ENCODE measurements at regions of chr6 and their contacts with region 1.

Region 1: GRCh38 chr6:31680840-31681671 is at the start of gene LY6G5C:
- DNase-seq: peak; percentile 89
- ATAC-seq: peak; percentile 91
- total RNA-seq, gene LY6G5C: 1.5 TPM

Region 2: DNA sequence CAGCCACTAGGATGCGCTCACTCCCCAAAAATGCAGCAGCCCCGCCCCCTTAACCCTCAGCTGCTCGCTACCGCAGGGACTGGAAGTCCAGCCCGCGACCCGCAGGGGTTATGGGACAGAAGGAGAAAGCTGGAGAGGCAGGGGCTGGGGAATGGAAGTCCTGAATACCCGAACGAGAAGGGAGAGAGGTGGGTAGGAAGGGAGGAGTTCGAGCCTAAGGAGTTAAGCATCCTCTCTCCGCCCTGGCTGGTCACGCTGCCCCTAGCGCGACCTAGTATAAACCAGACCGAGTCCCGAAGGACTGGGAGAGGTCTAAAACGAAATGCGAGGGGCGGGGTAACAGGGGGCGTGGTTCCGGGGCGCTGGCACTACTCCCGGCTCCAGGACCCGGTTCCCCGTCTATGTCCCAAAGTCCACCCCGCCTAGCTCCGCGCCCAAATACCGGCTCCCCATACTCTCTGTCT is 48.5 kb after region 1 on chr6:
- intact Hi-C with region 1: loop called (anchors 2 kb)
- DNase-seq: peak; percentile 95
- ATAC-seq: peak; percentile 90

Region 3: DNA sequence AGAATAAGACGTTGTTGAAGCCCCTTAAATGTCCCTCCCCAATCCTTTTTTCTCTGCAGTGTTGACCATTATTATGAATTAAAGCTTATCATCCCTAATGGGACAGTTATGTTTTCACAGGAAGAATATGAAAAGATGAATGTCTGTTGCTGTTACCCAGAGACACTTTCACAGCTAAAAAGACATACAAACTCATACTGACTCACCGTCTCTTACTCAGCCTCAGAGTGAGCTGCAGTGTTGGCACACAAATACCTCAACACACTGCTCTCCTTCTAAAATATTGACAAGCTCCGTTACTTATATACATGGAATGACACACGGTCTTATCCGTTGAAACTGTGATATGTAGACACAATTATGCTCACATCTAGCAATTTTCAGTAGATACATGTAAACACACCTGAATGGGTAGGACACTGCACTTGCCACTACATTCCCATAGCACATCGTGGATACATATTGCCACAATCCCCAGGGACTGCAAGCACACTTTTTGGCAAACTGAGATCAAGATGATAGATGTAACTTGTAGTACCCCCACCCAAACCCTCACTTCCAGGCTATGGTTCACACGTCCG is 71.8 kb after region 1 on chr6:
- intact Hi-C with region 1: no loop called
- DNase-seq: no peak
- ATAC-seq: no peak

Region 4: DNA sequence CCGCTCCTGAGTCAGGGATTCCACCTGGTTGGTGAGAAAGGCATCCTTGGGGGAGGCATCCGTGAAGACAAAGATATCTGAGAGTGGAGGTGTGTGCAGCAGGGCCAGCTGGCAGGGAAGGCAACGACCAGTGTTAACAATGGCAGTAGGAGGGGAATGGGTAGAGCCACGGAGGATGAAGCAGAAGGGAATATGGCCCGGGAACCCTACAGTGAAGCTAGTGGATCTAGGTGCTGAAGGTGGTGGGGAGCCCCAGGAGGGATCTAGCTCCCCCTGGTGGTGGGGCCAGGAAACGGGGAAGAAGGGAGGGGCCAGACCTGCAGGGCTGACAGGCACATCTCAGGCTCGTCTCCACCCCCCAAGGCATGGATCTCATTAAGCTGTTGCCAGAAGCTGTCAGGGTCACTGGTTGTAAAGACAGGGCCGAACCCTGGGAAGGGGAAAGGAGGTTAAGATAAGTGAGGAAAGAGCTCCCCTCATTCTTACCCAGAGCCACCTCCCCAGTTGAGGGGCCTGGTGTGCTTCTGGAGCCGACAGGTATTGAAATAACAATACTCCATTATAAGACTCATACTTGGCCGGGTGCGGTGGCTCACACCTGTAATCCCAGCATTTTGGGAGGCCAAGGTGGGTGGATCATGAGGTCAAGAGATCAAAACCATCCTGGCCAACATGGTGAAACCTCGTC is 88.8 kb after region 1 on chr6:
- intact Hi-C with region 1: loop called (anchors 2 kb)
- DNase-seq: peak; percentile 90
- ATAC-seq: peak; percentile 70

Region 5: GRCh38 chr6:31834434-31835198 is 153.6 kb after region 1 on chr6:
- intact Hi-C with region 1: loop called (anchors 5 kb)
- DNase-seq: peak; percentile 94
- ATAC-seq: peak; percentile 92

Region 6: GRCh38 chr6:31862344-31863227 is 181.5 kb after region 1 on chr6 and contains the start of gene NEU1:
- intact Hi-C with region 1: loop called (anchors 10 kb)
- DNase-seq: peak; percentile 100
- ATAC-seq: peak; percentile 98
- total RNA-seq, gene NEU1: 25.6 TPM

Region 7: DNA sequence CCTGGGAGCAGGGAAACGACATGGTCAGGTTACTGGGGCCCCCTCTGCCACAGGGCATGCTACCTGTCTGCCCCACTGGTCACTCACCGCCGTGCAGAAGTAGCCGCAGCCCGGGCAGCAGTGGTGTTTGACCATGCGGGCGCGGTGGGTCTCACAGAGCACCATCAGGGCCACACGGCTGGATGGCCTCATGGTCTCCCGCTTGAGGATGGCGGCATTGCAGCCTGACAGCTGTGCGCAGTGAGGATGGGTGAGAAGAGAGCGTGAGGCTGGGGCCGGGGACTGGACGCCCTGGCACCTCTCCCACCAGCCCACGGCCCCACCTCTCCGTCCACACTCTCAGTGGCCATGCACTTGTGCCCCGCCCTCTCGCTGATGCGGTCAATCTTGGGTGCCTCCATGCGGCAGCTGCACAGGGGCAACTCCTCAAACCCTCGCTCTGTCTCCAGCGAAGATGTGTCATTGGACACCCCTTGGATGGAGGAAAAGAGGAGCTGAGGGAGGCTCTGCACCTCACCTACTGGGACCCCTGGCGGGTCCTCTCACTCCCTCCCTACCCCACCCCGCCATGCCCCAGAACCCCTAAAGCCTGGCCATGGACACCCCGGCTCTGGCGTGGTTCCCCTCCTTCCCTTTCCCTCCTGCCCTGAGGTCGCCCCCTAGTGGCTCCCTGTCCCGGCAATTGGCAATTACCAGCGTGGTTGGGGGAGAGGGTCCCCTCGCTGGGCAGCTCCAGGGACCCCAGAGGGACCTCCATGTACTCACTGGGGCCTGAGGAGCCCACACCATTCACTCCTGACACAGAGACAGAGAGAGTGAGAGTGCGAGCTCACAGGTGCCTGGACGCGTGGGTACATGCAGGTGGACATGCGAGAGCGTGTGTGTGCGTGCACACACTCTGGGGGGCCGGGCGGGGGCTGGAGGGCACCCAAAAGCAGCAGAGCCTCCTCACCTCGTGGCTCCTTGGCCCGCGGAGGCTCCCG is 207.5 kb after region 1 on chr6:
- intact Hi-C with region 1: loop called (anchors 2 kb)
- DNase-seq: no peak
- ATAC-seq: peak; percentile 23

Region 8: GRCh38 chr6:31952140-31952805 is 271.2 kb after region 1 on chr6:
- intact Hi-C with region 1: loop called (anchors 2 kb)
- DNase-seq: peak; percentile 78
- ATAC-seq: peak; percentile 55

Measured in Right ventricle myocardium inferior (tissue), 1 donor.